PC-9 (cell line): ENCODE measurements at regions of chr11 and their contacts with region 1.

Region 1: DNA sequence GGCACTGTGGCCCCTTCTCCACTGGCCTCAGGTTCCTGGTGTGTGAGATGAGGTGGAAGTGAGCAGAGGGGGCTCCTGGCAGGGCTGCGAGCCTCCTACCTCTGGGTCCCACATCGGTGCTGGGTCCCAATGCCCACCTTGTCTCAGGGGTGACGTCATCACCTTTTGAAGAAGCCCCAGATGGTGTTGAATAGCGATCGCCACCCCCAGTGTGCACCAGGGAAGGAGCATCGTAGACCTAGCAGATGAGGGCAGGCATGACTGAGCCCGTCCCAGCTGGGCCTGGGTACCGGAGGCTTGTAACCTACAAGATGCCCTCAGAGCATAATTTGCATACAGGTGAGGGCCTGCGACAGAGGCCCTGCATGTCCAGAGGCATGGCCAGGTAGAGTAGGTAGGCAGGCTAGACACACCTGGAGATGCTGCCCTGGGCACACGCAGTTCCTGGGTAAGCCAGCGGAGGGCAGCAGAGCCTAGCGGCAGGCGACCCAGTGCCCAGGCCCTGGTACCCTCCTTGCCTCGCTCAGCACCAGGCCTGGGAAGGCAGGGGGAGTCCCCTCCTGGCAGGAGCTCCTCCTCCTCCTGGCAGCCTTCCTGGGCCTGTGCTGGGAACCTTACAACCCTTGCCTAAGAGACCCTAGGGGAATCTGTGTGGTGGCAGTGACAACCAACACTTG is 52.5 kb downstream of the TPCN2 start:
- DNase-seq: peak; percentile 82 to 91
- H3K4me3 ChIP-seq: no peak overlapping the region
- H3K27ac ChIP-seq: no peak overlapping the region
- H3K4me1 ChIP-seq: peaks cover 26% of the 10 kb centered on the region
- H3K27me3 ChIP-seq: no peaks in the 10 kb centered on the region
- CTCF ChIP-seq: peak; percentile 99

Region 2: DNA sequence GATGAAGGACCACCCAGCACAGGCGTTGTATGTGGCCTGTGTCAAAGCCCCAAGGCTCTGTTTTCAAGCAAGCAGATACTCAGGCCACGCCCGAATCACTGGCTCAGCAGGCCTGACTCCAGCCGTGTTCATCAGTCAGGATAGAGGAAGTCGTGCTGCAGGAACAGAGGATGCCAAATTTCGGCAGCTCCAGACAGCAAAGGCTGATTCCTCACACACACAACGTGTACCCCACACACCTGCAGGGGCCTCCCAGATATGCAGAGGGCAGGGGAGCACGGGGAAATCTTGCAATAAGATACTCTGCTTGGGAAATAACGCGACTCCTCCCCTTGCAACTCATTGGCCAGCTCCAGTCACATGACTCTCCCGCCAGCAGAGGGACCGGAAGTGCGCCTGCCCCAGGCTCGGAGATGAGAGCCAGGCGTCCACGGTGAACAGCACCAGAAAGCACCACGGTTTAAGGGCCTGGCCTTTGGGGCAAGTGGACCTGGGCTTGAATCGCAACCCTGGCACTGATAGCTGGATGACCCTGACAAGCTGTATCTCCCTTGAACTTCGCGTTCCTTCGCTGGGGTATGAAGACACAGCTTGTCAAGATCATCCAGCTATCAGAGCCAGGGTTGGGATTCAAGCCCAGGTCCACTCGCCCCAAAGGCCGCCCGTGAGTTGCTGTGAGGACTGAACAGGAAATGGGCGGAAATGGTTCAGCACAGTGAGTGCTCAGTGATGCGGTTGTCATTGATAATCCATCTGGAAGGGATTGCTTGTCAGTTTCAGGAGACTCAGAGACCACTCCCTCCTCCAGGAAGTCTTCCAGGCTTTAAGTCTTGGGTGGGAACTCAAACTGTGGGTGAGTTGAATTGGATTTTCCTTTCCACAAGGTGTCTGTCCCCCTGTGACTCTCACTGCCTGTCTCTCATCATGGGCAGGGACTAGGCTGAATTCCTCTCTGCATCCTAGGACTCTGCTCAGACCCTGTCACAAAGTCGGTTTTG is 281.2 kb after region 1 on chr11:
- CTCF ChIA-PET with region 1: no interaction called
- POLR2A ChIA-PET with region 1: interaction called, 3 read pairs
- intact Hi-C with region 1: loop called (anchors 5 kb)
- DNase-seq: peak; percentile 82 to 88
- H3K4me3 ChIP-seq: peak overlapping the region; percentile 43; the same call in 1 of the 2 replicates
- H3K27ac ChIP-seq: peak overlapping the region; percentile 59
- H3K4me1 ChIP-seq: peaks cover 30% of the 10 kb centered on the region
- H3K27me3 ChIP-seq: no peaks in the 10 kb centered on the region
- CTCF ChIP-seq: no peak

Region 3: DNA sequence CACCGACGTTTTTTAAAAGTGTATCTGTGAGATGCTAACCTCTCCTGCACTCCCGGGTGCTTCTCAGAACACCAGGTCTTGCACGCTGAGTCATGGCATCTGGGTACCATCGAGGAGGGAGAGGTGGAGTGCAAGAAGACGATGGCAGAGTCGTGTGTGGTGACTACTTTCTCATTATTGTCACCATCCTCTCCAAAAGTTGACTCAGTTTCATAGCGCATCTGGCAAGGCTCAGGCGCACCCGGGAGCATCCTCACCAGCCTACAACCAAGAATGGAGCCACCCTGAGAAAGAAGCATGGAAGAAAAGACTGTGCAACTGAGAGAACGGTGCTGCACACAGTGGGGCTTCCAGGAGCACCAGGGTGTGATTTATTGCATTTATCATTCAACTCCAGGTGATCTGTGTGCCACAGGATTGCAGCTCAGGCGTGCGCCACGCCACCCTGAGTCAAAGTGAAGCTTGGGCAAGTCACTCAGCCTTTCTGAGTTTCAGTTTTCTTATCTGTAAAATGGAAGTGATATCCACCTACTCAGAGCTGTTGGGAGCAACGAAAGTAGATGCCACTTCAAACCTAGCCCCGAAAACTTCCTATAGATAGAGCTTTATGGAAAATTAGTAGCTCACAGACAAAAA is 445.6 kb after region 1 on chr11:
- CTCF ChIA-PET with region 1: no interaction called
- POLR2A ChIA-PET with region 1: interaction called, 12 read pairs
- intact Hi-C with region 1: no loop called
- DNase-seq: no peak
- H3K4me3 ChIP-seq: no peak overlapping the region
- H3K27ac ChIP-seq: no peak overlapping the region
- H3K4me1 ChIP-seq: no peaks in the 10 kb centered on the region
- H3K27me3 ChIP-seq: 0 out of 2 replicates have a peak, but pooled peaks cover 12% of the 10 kb centered on the region
- CTCF ChIP-seq: no peak

Region 4: DNA sequence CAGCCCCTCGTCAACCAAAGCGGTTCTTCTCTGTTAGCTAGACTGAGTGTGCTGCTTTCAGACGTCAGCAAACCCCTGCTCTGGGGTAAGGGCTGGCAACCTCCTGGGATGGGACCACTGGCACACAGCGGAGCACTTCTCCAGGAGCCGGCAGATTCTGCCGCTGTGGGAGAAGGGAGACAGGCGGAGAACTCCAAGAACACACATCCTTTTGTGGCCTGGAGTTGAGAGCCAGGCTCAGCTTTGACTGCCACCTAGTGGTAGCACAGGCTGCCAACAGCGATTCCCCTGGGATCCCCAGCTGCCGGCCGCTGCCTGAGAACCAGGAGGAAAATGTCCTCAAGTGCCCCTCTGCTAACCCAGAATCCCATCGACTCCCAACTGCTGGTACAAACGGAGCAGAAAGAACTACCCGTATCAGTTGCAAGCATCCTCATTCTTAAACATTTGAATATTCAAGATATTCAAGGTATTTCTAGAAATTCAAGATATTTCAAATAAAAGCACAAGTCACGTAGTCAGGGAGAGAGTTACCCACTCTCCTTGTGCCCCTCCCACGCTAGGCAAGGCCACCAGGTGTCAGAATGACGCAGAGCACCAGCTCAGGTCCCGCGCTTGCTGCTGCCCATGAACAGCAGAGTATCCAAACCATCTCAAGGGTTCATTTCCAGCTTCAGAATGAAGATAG is 569.0 kb after region 1 on chr11:
- CTCF ChIA-PET with region 1: interaction called, 3 read pairs
- POLR2A ChIA-PET with region 1: interaction called, 4 read pairs
- intact Hi-C with region 1: loop called (anchors 1 kb)
- DNase-seq: peak; percentile 65 to 83
- H3K4me3 ChIP-seq: no peak overlapping the region
- H3K27ac ChIP-seq: no peak overlapping the region
- H3K4me1 ChIP-seq: peaks cover 14% of the 10 kb centered on the region
- H3K27me3 ChIP-seq: no peaks in the 10 kb centered on the region
- CTCF ChIP-seq: peak; percentile 97